PC-3 (cell line): ENCODE measurements at regions of chr19 and their contacts with region 1.

Region 1: DNA sequence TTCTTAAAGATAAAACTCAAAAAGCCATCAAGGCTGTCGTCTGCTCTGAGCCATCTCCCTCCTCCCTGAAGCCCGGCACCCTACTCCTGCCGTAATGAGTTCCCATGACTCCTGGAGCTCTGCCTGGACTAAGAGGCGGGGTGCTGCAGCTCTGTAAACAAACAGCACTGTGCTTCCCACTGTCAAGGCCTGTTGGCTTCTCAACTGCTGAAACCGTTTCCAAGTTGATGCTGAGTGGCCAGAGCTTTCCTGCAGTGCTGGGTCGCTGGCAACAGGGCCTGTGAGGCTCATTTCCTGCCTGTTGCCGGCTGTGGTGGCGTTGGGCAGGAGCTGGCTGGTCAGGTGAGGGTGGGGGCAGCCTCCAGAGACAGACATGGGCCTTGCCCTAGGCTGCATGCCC is 26.7 kb upstream of the ISYNA1 start:
- DNase-seq: peak; percentile 49
- ATAC-seq: peak; percentile 49
- H3K4me3 ChIP-seq: no peak overlapping the region
- H3K27ac ChIP-seq: peak overlapping the region; percentile 14; the same call in 1 of the 2 replicates
- H3K4me1 ChIP-seq: peaks cover 41% of the 10 kb centered on the region
- H3K27me3 ChIP-seq: no peaks in the 10 kb centered on the region
- CTCF ChIP-seq: no peak

Region 2: GRCh38 chr19:18401580-18402112 is 63.0 kb before region 1 on chr19:
- CTCF ChIA-PET with region 1: no interaction called
- POLR2A ChIA-PET with region 1: no interaction called
- intact Hi-C with region 1: no loop called
- DNase-seq: peak; percentile 62
- ATAC-seq: peak; percentile 87
- H3K4me3 ChIP-seq: no peak overlapping the region
- H3K27ac ChIP-seq: no peak overlapping the region
- H3K4me1 ChIP-seq: peaks cover 10% of the 10 kb centered on the region; the same call in 1 of the 2 replicates
- H3K27me3 ChIP-seq: no peaks in the 10 kb centered on the region
- CTCF ChIP-seq: peak; percentile 48

Region 3: GRCh38 chr19:18450931-18451845 is 13.5 kb before region 1 on chr19:
- CTCF ChIA-PET with region 1: interaction called, 14 read pairs
- POLR2A ChIA-PET with region 1: no interaction called
- intact Hi-C with region 1: loop called (anchors 1 kb)
- DNase-seq: peak; percentile 82
- ATAC-seq: peak; percentile 58
- H3K4me3 ChIP-seq: no peak overlapping the region
- H3K27ac ChIP-seq: no peak overlapping the region
- H3K4me1 ChIP-seq: peaks cover 21% of the 10 kb centered on the region
- H3K27me3 ChIP-seq: no peaks in the 10 kb centered on the region
- CTCF ChIP-seq: peak; percentile 96

Region 4: GRCh38 chr19:18571564-18572300 is 107.1 kb after region 1 on chr19 and contains the start of gene UBA52:
- CTCF ChIA-PET with region 1: no interaction called
- POLR2A ChIA-PET with region 1: no interaction called
- intact Hi-C with region 1: loop called (anchors 5 kb)
- DNase-seq: peak; percentile 99
- ATAC-seq: peak; percentile 96
- H3K4me3 ChIP-seq: peak within 1 kb of the TSS; percentile 100
- H3K27ac ChIP-seq: peak within 1 kb of the TSS; percentile 63
- H3K4me1 ChIP-seq: peaks cover 15% of the 10 kb centered on the region
- H3K27me3 ChIP-seq: no peaks in the 10 kb centered on the region
- CTCF ChIP-seq: no peak
- total RNA-seq, gene UBA52: 871 and 1,108 TPM in 2 replicates